Head of caudate nucleus (tissue), 42 donors: ENCODE measurements at regions of chr11 and their contacts with region 1.

Region 1: DNA sequence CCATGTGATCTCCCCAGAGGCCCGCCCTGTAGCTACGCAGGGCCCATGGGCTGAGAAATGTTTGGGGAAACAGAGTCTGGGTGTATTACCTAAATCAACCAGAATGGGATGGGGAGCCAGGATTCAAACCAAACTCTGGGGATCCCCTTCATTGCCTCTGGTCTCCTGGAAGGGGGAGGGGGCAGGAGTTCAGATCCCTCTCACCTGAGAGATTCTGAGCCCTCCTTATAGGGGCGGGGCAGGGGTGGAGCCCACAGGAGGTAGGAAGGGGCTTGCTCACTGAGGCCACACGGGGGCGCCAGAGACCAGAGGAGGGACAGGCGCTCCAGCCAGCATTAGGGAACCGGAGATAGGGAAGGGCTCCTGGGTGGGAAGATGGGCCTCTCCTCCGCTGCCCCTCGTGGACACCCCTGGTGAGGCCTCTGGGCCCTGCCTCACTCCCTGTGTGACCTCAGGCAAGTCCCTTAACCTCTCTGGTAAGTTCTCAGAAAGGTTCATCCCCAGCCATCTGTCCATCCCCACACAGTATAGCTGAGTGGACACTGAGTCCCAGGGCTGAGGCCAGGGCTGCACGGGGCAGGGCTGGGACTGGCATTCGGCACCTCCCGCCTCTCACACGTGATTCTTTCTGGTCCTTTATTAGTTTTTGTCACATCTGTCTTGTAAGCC is 2.7 kb upstream of the CDC42BPG start:
- DNase-seq: peak; percentile 81 to 97 (median 94)

Region 2: DNA sequence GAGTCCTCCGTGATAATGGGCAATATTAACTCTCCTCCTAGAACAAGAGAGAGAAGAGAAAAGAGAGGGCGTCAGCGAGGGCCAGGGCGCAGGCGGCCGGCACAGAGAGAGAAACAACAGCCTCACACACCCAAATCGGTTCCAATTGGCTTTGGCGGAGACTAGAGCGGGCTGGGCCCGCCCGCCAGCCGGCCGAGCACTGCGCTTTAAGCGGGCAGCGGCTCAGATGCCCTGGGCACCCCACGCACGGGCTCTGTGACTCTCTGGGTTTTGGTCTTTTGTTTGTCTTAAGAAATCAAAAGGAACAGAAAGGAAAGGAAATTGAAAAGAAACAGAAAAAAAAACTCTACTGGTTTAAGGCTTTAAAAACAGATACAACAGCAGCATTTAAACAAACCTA is 239.1 kb before region 1 on chr11:
- intact Hi-C with region 1: no loop called
- DNase-seq: peak in 8 of 42 donors; percentile 32 to 59 (median 42)

Region 3: DNA sequence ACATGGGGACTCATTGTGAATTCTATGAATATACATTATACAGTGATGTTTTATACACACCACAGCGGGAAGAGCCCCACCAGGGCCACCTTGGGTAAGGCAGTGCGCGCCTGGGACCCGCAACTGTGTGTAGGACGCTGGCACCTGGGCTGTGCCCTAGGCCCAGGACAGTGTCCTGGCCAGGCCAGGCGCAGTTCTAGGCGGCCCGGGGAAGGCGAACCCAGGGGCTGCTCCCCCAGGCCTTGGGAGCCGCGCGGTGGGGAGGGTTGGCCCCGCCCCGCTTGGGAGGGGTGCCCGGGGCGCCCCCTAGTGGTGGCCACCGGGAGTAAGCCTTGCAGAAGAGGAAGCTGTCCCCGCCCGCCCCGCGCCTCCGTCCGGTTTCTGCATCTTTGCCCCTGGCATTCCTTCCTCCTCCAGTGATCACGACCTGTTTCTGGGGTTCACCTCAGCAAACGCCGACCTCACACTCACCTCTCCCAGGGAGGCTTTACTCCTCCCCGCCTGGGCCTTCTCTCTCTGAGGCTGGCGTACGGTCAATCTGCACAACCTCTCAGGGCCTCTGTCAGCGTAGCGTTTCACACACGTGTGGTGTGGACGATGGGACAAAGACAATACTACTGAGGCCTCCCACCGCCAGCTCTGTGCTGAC is 40.7 kb after region 1 on chr11:
- intact Hi-C with region 1: loop called (anchors 2 kb)
- DNase-seq: peak; percentile 52 to 94 (median 86)

Region 4: GRCh38 chr11:64898541-64898940 is 51.4 kb after region 1 on chr11:
- intact Hi-C with region 1: no loop called
- DNase-seq: no peak